HEK293T (cell line): ENCODE measurements at regions of chr13 and their contacts with region 1.

Region 1: GRCh38 chr13:67224148-67224846 is 5.8 kb downstream of the PCDH9 start:
- DNase-seq: peak; percentile 93

Region 2: DNA sequence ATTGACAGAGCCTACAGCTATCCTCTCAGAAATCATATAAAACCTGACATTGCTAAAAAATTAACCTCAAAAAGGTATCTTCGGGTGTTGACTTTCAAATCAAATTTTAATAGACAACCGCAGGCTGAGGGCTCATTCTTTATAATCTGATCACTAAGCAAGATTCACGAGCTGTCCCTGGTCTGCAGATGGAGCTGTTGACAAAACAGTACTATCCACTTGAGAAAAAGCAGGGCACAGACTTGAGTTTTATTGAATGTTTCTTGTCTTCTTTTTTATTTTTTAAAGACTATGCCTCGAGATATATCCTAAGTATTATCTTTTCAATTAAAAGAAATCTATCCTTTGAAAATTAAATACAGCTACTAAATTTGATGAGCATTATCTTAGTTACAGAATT is 534.7 kb before region 1 on chr13:
- CTCF ChIA-PET with region 1: interaction called, 10 read pairs
- POLR2A ChIA-PET with region 1: interaction called, 4 read pairs
- DNase-seq: peak; percentile 58

Region 3: GRCh38 chr13:66994097-66994496 is 230.2 kb before region 1 on chr13:
- CTCF ChIA-PET with region 1: interaction called, 12 read pairs
- POLR2A ChIA-PET with region 1: no interaction called
- DNase-seq: peak; percentile 60

Region 4: DNA sequence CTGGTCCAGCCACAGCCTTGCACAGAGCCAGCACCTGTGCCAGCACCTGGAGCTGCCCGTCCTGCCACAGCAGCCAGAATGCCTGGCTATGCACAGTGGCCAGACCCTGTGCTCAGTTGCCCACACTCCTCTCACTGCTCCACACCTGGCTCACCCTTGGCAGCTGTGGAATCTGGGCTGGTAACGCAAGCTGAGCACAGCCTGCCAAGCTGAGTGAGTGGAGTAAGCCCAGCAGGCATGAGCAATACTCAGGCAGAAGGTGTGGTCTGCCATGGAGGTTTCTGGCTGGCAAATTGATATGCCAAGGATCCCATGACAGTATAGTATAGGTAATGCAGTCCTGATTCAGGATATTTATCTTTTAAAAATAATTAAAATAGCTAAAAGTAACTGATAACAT is 116.3 kb before region 1 on chr13:
- CTCF ChIA-PET with region 1: no interaction called
- POLR2A ChIA-PET with region 1: no interaction called
- DNase-seq: no peak

Region 5: GRCh38 chr13:67119481-67119883 is 104.8 kb before region 1 on chr13:
- CTCF ChIA-PET with region 1: no interaction called
- POLR2A ChIA-PET with region 1: no interaction called
- DNase-seq: no peak